Naive thymus-derived CD8-positive, alpha-beta T cell (primary cell): ENCODE measurements at regions of chr2 and their contacts with region 1.

Region 1: GRCh38 chr2:207143215-207144172 is 22.3 kb downstream of the KLF7 start:
- DNase-seq: peak; percentile 42 to 88 (median 68)
- ATAC-seq: peak; percentile 76 to 79
- H3K4me3 Mint-ChIP-seq: peak overlapping the region; percentile 70 to 89 (median 82)
- H3K27ac Mint-ChIP-seq: peak overlapping the region; percentile 92 to 98 (median 96)
- H3K4me1 Mint-ChIP-seq: peaks cover 42 to 85% (median 83%) of the 10 kb centered on the region in 4 donors
- H3K27me3 Mint-ChIP-seq: no peaks in the 10 kb centered on the region

Region 2: DNA sequence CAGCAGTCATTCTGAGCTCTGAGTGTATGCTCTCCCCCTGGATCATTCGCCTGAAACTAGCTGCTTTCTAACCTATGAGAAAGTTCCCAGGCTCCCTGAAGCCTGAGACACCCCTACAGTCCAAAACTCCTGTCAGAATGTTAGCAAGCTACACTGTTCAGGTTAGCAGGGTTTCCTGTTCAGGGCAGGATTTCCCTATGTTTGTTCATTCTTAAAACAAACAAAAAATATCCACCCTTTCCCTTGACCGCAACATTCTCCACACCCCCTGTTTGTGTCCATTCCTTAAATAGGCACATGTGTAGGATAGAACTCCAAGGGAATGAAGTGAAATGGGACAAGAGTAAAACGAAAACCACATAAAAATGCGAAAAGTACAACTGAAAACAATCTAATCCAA is 60.9 kb before region 1 on chr2:
- POLR2A ChIA-PET with region 1: no interaction called
- DNase-seq: no peak
- ATAC-seq: no peak
- H3K4me3 Mint-ChIP-seq: no peak overlapping the region
- H3K27ac Mint-ChIP-seq: peak overlapping the region in 6 of 10 donors; percentile 11 to 73 (median 56)
- H3K4me1 Mint-ChIP-seq: peaks cover 0 to 9% (median 4%) of the 10 kb centered on the region in 4 donors
- H3K27me3 Mint-ChIP-seq: no peaks in the 10 kb centered on the region

Region 3: DNA sequence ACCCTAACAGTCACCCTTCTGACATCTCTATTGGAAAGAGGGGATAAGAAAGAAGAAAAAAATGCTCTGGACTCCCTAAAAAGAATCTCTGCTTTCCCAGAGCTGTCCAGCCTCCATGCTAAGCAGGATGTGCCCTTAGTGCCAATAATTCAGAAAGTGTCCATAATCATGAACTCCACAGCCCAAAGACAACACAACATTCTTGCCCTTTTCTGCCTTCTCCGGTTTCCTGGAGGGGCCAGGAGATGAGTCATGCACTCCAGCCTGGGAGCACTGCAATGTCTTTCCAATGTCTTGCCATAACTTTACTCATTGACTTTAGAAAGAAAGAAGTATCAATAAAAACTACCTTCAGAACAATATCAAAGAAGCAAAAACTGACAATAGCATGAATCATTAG is 21.7 kb before region 1 on chr2:
- POLR2A ChIA-PET with region 1: interaction called, 10 read pairs
- DNase-seq: no peak
- ATAC-seq: no peak
- H3K4me3 Mint-ChIP-seq: no peak overlapping the region
- H3K27ac Mint-ChIP-seq: peak overlapping the region in 3 of 10 donors; percentile 13 to 23 (median 18)
- H3K4me1 Mint-ChIP-seq: peaks cover 33 to 75% (median 56%) of the 10 kb centered on the region in 4 donors
- H3K27me3 Mint-ChIP-seq: no peaks in the 10 kb centered on the region

Region 4: GRCh38 chr2:207156451-207157161 is 13.1 kb after region 1 on chr2:
- POLR2A ChIA-PET with region 1: interaction called, 399 read pairs
- DNase-seq: no peak
- ATAC-seq: peak; percentile 13 to 19
- H3K4me3 Mint-ChIP-seq: peak overlapping the region; percentile 2 to 85 (median 74)
- H3K27ac Mint-ChIP-seq: peak overlapping the region; percentile 38 to 90 (median 86)
- H3K4me1 Mint-ChIP-seq: peaks cover 44 to 100% (median 94%) of the 10 kb centered on the region in 4 donors
- H3K27me3 Mint-ChIP-seq: no peaks in the 10 kb centered on the region

Region 5: DNA sequence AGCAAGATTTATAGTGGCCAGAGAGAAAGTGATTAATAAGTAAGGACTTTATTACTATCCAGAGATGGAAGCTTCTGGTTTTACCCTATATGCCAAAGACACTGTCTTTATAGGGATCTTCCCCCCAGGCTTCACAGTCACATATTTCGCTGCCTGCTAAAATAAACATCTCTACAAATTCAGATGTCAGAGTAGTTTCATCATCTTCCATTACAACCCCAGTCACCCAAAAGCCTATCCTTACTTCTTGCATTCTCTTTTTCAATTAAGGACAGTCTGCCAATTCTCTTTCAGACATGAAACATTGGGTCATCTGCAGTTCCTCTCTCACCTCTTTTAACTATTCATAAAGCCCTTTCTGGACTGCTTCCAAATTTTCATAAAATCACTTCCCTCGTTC is 414.6 kb after region 1 on chr2:
- POLR2A ChIA-PET with region 1: no interaction called
- DNase-seq: no peak
- ATAC-seq: no peak
- H3K4me3 Mint-ChIP-seq: no peak overlapping the region
- H3K27ac Mint-ChIP-seq: peak overlapping the region in 3 of 10 donors; percentile 33 to 61 (median 36)
- H3K4me1 Mint-ChIP-seq: peaks cover 18 to 38% (median 31%) of the 10 kb centered on the region in 4 donors
- H3K27me3 Mint-ChIP-seq: no peaks in the 10 kb centered on the region